ENCODE measurements at regions of chr1 and their contacts with region 1.

Region 1: DNA sequence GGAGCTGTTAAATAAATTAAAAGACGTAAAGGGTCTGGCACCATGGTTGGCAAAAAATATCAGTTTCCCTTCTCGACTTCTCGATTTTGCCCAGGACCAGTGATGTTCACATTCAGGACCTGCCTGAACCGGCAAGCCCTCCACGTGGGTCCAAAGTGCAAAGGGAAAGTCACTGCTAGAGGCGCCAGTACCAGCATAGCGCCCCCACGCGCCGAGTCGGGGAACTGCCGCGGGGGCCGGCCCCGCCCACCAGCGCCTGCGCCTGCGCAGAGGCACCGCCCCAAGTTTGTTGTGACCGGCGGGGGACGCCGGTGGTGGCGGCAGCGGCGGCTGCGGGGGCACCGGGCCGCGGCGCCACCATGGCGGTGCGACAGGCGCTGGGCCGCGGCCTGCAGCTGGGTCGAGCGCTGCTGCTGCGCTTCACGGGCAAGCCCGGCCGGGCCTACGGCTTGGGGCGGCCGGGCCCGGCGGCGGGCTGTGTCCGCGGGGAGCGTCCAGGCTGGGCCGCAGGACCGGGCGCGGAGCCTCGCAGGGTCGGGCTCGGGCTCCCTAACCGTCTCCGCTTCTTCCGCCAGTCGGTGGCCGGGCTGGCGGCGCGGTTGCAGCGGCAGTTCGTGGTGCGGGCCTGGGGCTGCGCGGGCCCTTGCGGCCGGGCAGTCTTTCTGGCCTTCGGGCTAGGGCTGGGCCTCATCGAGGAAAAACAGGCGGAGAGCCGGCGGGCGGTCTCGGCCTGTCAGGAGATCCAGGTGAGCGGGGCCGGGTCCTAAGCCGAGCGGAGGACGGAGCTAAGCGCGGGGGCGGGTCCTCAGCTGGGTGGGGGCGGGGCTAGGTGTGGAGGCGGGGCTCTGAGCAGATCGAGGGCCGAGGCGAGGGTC is at the start of gene PINK1:
- DNase-seq: peak; percentile 74
- H3K4me3 ChIP-seq: peak within 1 kb of the TSS; percentile 32 to 80 (median 58)
- H3K27ac ChIP-seq: peak within 1 kb of the TSS; percentile 69
- H3K4me1 ChIP-seq: peaks cover 10% of the 10 kb centered on the region
- H3K27me3 ChIP-seq: no peaks in the 10 kb centered on the region
- CTCF ChIP-seq: peak; percentile 94 to 95
- total RNA-seq, gene PINK1: 57.2 to 90.0 TPM

Region 2: GRCh38 chr1:19918057-19918456 is 715.4 kb before region 1 on chr1:
- CTCF ChIA-PET with region 1: no interaction called
- dilution Hi-C with region 1: no loop called
- in situ Hi-C with region 1: no loop called
- intact Hi-C with region 1: loop called (anchors 5 kb)
- DNase-seq: peak; percentile 60
- H3K4me3 ChIP-seq: no peak overlapping the region
- H3K27ac ChIP-seq: no peak overlapping the region
- H3K4me1 ChIP-seq: no peaks in the 10 kb centered on the region
- H3K27me3 ChIP-seq: no peaks in the 10 kb centered on the region
- CTCF ChIP-seq: peak; percentile 90 to 95

Region 3: GRCh38 chr1:20361806-20362640 is 271.4 kb before region 1 on chr1:
- CTCF ChIA-PET with region 1: interaction called, 12 read pairs
- dilution Hi-C with region 1: no loop called
- in situ Hi-C with region 1: no loop called
- intact Hi-C with region 1: loop called (anchors 10 kb)
- DNase-seq: peak; percentile 55
- H3K4me3 ChIP-seq: no peak overlapping the region
- H3K27ac ChIP-seq: no peak overlapping the region
- H3K4me1 ChIP-seq: peaks cover 41% of the 10 kb centered on the region
- H3K27me3 ChIP-seq: peaks cover 5% of the 10 kb centered on the region
- CTCF ChIP-seq: peak; percentile 95 to 98

Region 4: DNA sequence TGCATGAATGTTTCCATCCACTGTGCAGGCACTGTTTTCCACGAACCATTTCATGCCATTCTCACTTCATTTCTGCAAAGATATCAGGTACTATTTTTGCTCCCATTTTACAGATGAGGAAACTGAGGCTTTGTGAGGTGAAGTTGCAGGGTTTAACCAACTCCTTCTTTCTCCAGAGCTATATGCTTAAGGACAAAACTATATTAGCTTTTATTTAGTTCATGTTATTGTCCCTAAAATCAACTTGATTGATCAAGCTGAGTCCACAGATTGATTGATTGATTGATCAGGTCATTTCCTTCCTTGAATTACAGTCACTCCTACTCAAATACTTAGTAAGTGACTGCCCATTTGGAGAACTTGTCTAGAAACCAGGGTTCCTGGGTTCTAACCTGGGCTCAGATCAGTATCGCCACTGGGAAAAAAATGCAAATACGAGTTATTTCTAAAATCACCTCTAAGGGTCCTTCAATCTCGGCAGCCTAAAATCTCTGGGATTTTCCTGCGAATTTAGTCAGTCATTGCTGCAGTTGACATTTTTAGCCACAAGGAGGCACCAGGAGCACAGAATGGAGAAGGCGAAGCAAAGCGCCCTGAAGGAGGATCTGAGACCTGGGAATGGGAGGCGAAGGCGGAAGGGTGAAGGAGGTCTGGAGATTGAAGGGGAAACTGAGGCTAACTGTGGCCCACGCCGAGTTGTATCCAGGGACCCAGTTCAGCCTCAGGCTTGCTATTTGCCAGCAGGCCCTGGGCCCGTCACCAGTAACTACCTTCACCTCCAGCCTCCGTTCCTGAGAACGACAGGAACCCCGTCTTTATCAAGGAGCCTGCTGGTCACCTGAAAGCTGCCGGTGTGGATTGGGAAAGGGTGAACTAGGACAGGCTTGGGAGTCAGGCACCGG is 111.2 kb before region 1 on chr1:
- CTCF ChIA-PET with region 1: no interaction called
- dilution Hi-C with region 1: no loop called
- in situ Hi-C with region 1: loop called (anchors 5 kb)
- intact Hi-C with region 1: loop called (anchors 1 kb)
- DNase-seq: peak; percentile 61
- H3K4me3 ChIP-seq: no peak overlapping the region
- H3K27ac ChIP-seq: no peak overlapping the region
- H3K4me1 ChIP-seq: no peaks in the 10 kb centered on the region
- H3K27me3 ChIP-seq: no peaks in the 10 kb centered on the region
- CTCF ChIP-seq: peak; percentile 94 to 98

Region 5: DNA sequence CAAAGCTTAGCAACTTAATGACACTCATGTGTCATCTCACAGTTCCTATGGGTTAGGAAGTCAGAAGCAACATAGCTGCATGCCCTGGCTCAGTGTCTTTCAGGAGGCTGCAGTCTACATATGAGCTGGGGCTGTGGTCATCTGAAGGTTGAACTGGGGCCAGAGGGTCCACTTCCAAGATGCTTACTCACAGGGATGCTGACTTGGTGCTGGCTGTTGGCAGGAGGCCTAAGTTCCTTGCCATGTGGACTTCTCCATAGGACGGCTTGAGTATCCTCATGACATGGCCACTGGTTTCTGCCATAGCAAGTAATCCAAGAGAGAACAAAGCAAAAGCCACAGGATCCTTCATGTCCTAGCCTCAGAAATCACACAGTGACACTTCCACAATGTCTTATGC is 93.1 kb before region 1 on chr1:
- CTCF ChIA-PET with region 1: no interaction called
- dilution Hi-C with region 1: no loop called
- in situ Hi-C with region 1: no loop called
- intact Hi-C with region 1: no loop called
- DNase-seq: no peak
- H3K4me3 ChIP-seq: no peak overlapping the region
- H3K27ac ChIP-seq: no peak overlapping the region
- H3K4me1 ChIP-seq: no peaks in the 10 kb centered on the region
- H3K27me3 ChIP-seq: no peaks in the 10 kb centered on the region
- CTCF ChIP-seq: no peak

Region 6: DNA sequence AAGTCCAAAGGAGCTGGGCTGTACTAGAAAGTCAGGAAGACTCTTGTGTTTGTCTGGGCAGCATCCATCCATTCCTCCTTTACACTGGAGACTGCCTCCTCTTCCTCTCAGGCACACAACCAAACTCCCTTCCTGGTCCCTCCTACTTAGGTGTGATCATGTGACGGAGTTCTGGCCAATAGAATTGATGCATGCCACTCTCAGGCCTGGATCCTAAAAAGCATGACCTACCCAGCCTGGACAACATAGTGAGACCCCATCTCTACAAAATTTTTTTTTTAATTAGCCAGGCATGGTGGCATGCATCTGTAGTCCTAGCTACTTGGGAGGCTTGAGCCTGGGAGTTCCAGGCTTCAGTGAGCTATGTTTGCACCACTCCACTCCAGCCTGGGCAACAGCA is 72.5 kb before region 1 on chr1:
- CTCF ChIA-PET with region 1: no interaction called
- dilution Hi-C with region 1: no loop called
- in situ Hi-C with region 1: no loop called
- intact Hi-C with region 1: no loop called
- DNase-seq: no peak
- H3K4me3 ChIP-seq: no peak overlapping the region
- H3K27ac ChIP-seq: no peak overlapping the region
- H3K4me1 ChIP-seq: no peaks in the 10 kb centered on the region
- H3K27me3 ChIP-seq: no peaks in the 10 kb centered on the region
- CTCF ChIP-seq: no peak

Region 7: DNA sequence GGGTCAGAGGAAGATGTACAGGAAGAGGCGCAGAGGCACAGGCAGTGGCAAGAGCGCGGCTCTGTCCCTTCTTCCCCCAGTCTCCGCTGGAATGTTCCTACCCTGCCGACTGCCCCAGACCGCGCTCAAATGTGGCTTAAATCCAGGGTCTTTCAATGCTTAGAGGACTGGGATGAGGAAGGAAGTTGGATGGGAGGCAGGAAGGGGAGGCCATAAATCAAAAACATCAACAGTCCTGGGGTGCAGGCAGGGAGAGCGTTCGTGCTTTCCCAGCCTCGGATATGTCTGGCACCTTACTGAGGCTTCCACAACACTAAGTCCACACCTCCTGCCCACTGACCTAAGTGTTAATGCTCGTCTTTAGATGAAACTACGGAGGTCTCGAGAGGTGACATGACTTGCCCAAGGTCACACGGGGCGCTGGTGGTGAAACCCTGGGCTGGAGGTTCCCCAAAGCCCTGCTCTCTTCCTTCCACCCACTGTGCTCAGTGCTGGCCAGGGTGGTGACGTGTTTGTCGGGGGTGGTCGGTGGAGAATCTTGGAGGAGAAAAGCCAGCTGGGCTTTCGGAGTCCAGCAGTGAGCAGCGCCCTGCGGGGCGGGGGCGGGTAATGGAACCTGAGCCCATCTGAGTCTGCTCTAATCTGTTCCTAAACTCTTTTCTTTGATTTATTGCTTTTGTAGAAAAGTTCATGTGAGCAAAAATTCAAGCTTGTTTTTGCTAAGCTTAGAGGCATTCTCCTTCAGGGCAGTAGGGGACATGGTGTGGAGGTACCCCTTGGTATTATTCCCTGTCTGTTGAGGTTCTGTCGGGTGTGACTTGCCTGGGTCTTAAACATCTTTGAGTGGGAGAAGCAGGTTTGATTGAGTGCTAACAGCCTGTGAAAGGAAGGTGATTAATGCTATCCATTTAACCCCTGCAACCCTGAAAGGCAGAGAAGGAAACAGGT is 43.8 kb before region 1 on chr1:
- CTCF ChIA-PET with region 1: no interaction called
- dilution Hi-C with region 1: loop called (anchors 5 kb)
- in situ Hi-C with region 1: no loop called
- intact Hi-C with region 1: loop called (anchors 1 kb)
- DNase-seq: no peak
- H3K4me3 ChIP-seq: peak overlapping the region; percentile 67 to 85 (median 69)
- H3K27ac ChIP-seq: peak overlapping the region; percentile 92
- H3K4me1 ChIP-seq: peaks cover 10% of the 10 kb centered on the region
- H3K27me3 ChIP-seq: no peaks in the 10 kb centered on the region
- CTCF ChIP-seq: no peak

Region 8: GRCh38 chr1:20603527-20604464 is 29.6 kb before region 1 on chr1:
- CTCF ChIA-PET with region 1: interaction called, 3 read pairs
- dilution Hi-C with region 1: no loop called
- in situ Hi-C with region 1: no loop called
- intact Hi-C with region 1: loop called (anchors 1 kb)
- DNase-seq: peak; percentile 94
- H3K4me3 ChIP-seq: no peak overlapping the region
- H3K27ac ChIP-seq: peak overlapping the region; percentile 96
- H3K4me1 ChIP-seq: peaks cover 57% of the 10 kb centered on the region
- H3K27me3 ChIP-seq: no peaks in the 10 kb centered on the region
- CTCF ChIP-seq: no peak

Region 9: GRCh38 chr1:20661207-20662109 is 28.0 kb after region 1 on chr1 and contains the start of gene DDOST:
- CTCF ChIA-PET with region 1: no interaction called
- dilution Hi-C with region 1: no loop called
- in situ Hi-C with region 1: no loop called
- intact Hi-C with region 1: no loop called
- DNase-seq: peak; percentile 97
- H3K4me3 ChIP-seq: peak within 1 kb of the TSS; percentile 90 to 98 (median 95)
- H3K27ac ChIP-seq: peak within 1 kb of the TSS; percentile 35
- H3K4me1 ChIP-seq: peaks cover 20% of the 10 kb centered on the region
- H3K27me3 ChIP-seq: no peaks in the 10 kb centered on the region
- CTCF ChIP-seq: peak; percentile 32 to 61
- total RNA-seq, gene DDOST: 181 to 238 TPM

Region 10: DNA sequence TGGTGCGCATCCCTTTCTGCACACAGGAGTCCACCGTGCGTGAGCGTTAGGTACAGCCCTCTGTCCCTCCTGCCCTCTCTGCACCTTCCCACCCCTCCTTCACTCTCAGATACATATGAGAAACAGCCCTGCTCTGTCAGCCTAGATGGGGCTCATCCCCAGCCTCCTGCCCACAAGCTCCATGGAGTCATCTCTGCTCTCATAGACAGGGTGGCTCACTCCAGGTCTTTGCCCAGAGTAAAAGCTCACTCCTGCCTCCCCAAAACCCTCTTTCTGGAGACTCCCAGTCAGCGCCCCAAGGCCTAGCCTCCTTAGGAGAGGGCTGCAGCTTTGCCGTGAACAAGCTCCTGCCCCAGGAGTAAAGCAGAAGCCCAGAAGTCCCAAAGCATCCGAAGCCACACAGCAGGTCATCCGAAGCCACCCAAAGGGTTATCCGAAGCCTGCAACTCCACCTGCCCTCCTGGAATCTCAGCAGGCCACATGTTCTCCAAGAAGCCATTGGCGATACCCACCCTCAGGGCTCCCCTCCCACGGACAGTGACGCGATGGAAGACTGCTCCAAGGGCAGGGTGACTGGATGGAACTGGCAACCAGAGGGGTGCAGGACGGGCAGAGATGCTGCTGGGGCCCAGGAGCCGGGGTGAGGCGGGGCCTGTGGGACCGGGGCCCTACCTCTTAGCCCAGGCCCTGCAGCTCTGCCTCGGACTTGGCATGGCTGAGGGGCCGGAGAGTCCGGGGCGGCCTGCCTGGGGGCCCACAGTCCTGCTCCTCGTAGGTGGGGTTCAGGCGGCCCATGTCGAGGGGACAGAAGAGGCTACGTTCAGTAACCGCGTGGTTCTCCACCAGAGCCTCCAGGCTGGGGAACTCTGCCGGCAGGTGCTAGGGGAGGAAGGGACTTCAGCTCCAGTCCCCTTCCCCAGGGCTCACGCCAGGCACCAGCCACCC is 88.0 kb after region 1 on chr1:
- CTCF ChIA-PET with region 1: interaction called, 16 read pairs
- dilution Hi-C with region 1: no loop called
- in situ Hi-C with region 1: no loop called
- intact Hi-C with region 1: no loop called
- DNase-seq: no peak
- H3K4me3 ChIP-seq: no peak overlapping the region
- H3K27ac ChIP-seq: no peak overlapping the region
- H3K4me1 ChIP-seq: peaks cover 23% of the 10 kb centered on the region
- H3K27me3 ChIP-seq: no peaks in the 10 kb centered on the region
- CTCF ChIP-seq: no peak

Measured in mammary epithelial cell (primary cell).